CD4-positive, alpha-beta memory T cell (primary cell): ENCODE measurements at regions of chr11 and their contacts with region 1.

Region 1: DNA sequence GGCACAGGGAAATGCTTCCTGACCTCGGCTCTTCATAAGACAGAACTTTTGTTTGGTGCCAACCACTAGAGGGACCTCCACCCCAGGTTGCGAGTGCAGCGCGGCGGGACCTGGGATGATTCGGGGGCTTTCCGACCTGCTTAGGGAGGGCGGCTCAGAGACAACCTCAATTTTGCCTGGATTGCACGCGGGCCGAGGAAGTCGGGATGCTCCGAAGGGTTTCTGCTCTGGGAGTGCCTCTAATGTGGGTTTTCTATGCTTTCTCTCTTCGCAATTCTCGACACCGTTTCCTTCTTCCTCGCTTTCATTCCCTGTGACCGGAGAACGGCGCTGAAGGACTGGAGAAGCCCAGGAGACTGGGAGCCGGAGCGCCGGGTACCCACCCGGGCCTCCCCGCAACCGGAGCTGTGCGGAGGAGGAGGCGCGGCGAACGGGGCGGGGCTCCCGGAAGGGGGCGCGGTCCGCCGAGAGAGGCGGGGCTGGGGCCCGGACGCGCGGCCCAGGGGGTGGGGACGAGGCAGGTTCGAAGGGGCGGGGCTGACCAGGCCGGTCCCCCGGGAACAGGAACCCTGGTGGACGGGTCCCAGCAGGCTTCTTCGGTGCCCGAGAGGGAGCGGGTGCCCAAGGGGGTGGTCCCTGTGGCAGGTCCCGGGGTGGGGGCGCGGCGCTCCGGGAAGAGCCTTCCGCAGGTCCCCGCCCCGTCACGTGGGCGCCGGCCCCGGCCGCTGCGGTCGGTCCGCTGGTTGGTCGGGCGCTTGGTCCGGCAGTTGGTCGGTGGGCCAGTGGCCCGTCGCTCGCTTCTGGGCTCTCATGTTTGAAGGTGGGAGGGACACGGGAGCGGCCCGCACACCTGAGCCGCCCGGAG is at the start of gene PPFIBP2:
- DNase-seq: peak; percentile 82 to 87 (median 82)
- H3K4me3 ChIP-seq: peak within 1 kb of the TSS; percentile 88 to 93
- H3K4me3 Mint-ChIP-seq: peak within 1 kb of the TSS; percentile 94 to 97 (median 96)
- H3K27ac ChIP-seq: peak within 1 kb of the TSS; percentile 84
- H3K27ac Mint-ChIP-seq: peak within 1 kb of the TSS; percentile 92 to 98 (median 96)
- H3K4me1 ChIP-seq: peaks cover 20% of the 10 kb centered on the region
- H3K4me1 Mint-ChIP-seq: peaks cover 10 to 58% (median 30%) of the 10 kb centered on the region in 4 donors
- H3K27me3 ChIP-seq: no peaks in the 10 kb centered on the region
- H3K27me3 Mint-ChIP-seq: no peaks in the 10 kb centered on the region
- total RNA-seq, gene PPFIBP2: 18.5 to 22.0 TPM

Region 2: DNA sequence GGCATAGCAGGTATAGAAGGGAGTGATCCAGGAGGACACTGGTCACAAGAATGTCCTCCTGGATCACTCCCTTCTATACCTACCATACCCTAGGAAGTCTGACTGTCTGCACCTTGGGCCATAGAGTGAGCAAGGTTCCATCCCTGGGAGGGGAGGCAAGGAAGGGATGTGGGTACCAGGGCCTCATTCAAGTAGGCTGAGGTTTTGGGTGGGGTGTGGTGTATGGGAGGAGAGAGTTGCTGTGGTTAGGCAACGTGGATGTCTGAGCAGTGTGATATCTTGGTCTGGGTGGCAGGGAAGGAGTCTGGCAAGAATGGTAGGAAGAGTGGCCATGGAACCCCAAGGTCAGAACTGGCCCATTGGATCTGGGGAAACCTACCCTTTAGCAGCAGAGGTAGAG is 13.6 kb after region 1 on chr11:
- CTCF ChIA-PET with region 1: interaction called, 34 read pairs
- POLR2A ChIA-PET with region 1: interaction called, 4 read pairs
- intact Hi-C with region 1: loop called (anchors 1 kb)
- DNase-seq: peak; percentile 63 to 76 (median 71)
- H3K4me3 ChIP-seq: no peak overlapping the region
- H3K4me3 Mint-ChIP-seq: peak overlapping the region; percentile 2 to 86 (median 75)
- H3K27ac ChIP-seq: peak overlapping the region; percentile 13
- H3K27ac Mint-ChIP-seq: peak overlapping the region; percentile 70 to 93 (median 86)
- H3K4me1 ChIP-seq: peaks cover 83% of the 10 kb centered on the region
- H3K4me1 Mint-ChIP-seq: peaks cover 24 to 94% (median 41%) of the 10 kb centered on the region in 4 donors
- H3K27me3 ChIP-seq: no peaks in the 10 kb centered on the region
- H3K27me3 Mint-ChIP-seq: no peaks in the 10 kb centered on the region

Region 3: DNA sequence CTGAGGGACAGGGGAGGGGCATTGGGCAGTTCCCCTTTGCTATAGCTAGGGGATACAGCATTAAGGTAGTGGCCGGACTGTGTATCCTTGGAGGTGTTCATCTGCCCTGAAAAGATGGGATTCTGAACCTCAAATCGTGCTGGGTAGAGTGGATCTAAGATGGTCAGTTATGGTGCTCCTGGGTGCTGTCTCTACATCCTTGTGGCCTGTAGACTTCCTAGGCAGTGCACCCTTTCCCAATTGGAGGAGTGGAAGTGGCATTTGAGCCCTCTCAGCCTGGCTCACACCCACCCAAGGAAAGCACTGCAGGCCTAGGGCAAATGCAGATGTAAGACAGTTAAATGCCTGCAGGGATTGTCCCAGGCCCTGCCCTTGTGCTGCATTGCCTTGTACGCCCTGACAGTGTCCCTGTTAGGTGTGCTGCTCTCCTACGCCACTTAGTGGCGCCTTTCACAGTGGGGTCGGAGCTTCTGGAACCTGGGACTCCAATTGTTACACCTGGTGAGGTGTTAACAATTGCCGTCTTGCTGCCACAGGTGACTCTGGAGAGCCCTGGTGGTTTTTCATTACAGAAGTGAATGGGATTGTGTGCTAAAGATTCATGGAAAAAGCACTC is 35.3 kb after region 1 on chr11:
- CTCF ChIA-PET with region 1: interaction called, 12 read pairs
- POLR2A ChIA-PET with region 1: no interaction called
- intact Hi-C with region 1: loop called (anchors 1 kb)
- DNase-seq: peak in 4 of 5 donors; percentile 10 to 30 (median 22)
- H3K4me3 ChIP-seq: no peak overlapping the region
- H3K4me3 Mint-ChIP-seq: no peak overlapping the region
- H3K27ac ChIP-seq: no peak overlapping the region
- H3K27ac Mint-ChIP-seq: peak overlapping the region in 1 of 7 donors; percentile 2
- H3K4me1 ChIP-seq: no peaks in the 10 kb centered on the region
- H3K4me1 Mint-ChIP-seq: peaks cover 0 to 23% (median 6%) of the 10 kb centered on the region in 4 donors
- H3K27me3 ChIP-seq: no peaks in the 10 kb centered on the region
- H3K27me3 Mint-ChIP-seq: no peaks in the 10 kb centered on the region

Region 4: GRCh38 chr11:7665473-7666291 is 152.2 kb after region 1 on chr11:
- CTCF ChIA-PET with region 1: interaction called, 49 read pairs
- POLR2A ChIA-PET with region 1: interaction called, 6 read pairs
- intact Hi-C with region 1: loop called (anchors 1 kb)
- DNase-seq: peak; percentile 58 to 70 (median 68)
- H3K4me3 ChIP-seq: no peak overlapping the region
- H3K4me3 Mint-ChIP-seq: no peak overlapping the region
- H3K27ac ChIP-seq: no peak overlapping the region
- H3K27ac Mint-ChIP-seq: no peak overlapping the region
- H3K4me1 ChIP-seq: no peaks in the 10 kb centered on the region
- H3K4me1 Mint-ChIP-seq: peaks cover 0 to 3% (median under 1%) of the 10 kb centered on the region in 4 donors
- H3K27me3 ChIP-seq: no peaks in the 10 kb centered on the region
- H3K27me3 Mint-ChIP-seq: peaks cover 3 to 5% of the 10 kb centered on the region in 2 donors

Region 5: DNA sequence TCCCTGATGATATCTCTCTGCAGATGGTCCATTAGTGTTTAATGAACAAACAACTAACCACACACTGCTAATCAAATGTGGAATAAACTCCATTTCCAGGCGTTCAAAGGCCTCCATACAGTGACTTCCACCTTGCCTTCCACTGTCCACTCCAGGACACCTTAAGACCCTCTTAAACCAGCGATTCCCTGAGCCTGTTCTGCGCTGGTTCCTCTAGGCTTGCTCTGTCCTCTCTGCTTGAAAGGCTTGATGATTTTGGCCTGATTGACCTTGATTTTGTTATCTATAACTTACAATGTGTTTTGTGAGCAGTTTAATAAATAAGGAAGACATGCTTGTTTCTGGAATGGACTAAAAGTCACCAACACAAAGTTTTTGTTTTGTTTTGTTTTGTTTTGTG is 180.8 kb after region 1 on chr11:
- CTCF ChIA-PET with region 1: interaction called, 9 read pairs
- POLR2A ChIA-PET with region 1: no interaction called
- intact Hi-C with region 1: loop called (anchors 1 kb)
- DNase-seq: no peak
- H3K4me3 ChIP-seq: no peak overlapping the region
- H3K4me3 Mint-ChIP-seq: no peak overlapping the region
- H3K27ac ChIP-seq: no peak overlapping the region
- H3K27ac Mint-ChIP-seq: no peak overlapping the region
- H3K4me1 ChIP-seq: peaks cover 6% of the 10 kb centered on the region
- H3K4me1 Mint-ChIP-seq: no peaks in the 10 kb centered on the region
- H3K27me3 ChIP-seq: no peaks in the 10 kb centered on the region
- H3K27me3 Mint-ChIP-seq: peaks cover 21% of the 10 kb centered on the region in 2 donors